Dendritic cell treated with granulocyte-macrophage colony-stimulating factor and Interleukin-4, amounts not matched to agents 40 ng/mL and 50 ng/mL, for 4 days (primary cell): ENCODE measurements at regions of chr1 and their contacts with region 1.

Region 1: GRCh38 chr1:30929135-30929889 is 20.8 kb upstream of the SDC3 start:
- H3K4me3 Mint-ChIP-seq: no peak overlapping the region
- H3K27ac Mint-ChIP-seq: no peak overlapping the region
- H3K4me1 Mint-ChIP-seq: peaks cover 22% of the 10 kb centered on the region
- H3K27me3 Mint-ChIP-seq: no peaks in the 10 kb centered on the region

Region 2: DNA sequence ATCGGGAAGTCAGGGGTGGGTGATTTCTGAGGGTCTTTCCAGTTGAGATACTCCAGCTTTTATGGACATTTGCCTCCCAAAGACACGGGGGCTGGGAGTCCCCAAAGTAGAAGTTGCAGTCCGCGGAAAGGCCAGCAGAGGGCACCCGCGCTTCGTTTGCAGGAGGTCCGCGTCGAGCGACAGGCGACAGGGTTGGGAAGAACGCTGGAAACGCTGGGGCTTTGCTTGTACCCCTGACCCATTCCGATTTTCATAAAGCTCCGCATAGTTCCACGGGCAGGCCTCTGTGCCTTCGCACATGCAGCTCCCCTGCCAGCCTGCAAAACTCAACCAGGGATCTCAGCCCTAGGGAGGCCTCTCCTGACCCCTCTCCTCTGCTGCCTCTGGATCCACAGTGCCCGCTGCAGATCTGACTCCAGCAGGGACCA is 127.5 kb before region 1 on chr1:
- intact Hi-C with region 1: loop called (anchors 2 kb)
- H3K4me3 Mint-ChIP-seq: no peak overlapping the region
- H3K27ac Mint-ChIP-seq: peak overlapping the region; percentile 4
- H3K4me1 Mint-ChIP-seq: peaks cover 65% of the 10 kb centered on the region
- H3K27me3 Mint-ChIP-seq: peaks cover 65% of the 10 kb centered on the region

Region 3: GRCh38 chr1:30823969-30824735 is 105.2 kb before region 1 on chr1:
- intact Hi-C with region 1: no loop called
- H3K4me3 Mint-ChIP-seq: peak overlapping the region; percentile 78
- H3K27ac Mint-ChIP-seq: peak overlapping the region; percentile 84
- H3K4me1 Mint-ChIP-seq: peaks cover 43% of the 10 kb centered on the region
- H3K27me3 Mint-ChIP-seq: peaks cover 76% of the 10 kb centered on the region